Colonic mucosa (tissue), 4 donors: ENCODE measurements at regions of chr15 and their contacts with region 1.

Region 1: DNA sequence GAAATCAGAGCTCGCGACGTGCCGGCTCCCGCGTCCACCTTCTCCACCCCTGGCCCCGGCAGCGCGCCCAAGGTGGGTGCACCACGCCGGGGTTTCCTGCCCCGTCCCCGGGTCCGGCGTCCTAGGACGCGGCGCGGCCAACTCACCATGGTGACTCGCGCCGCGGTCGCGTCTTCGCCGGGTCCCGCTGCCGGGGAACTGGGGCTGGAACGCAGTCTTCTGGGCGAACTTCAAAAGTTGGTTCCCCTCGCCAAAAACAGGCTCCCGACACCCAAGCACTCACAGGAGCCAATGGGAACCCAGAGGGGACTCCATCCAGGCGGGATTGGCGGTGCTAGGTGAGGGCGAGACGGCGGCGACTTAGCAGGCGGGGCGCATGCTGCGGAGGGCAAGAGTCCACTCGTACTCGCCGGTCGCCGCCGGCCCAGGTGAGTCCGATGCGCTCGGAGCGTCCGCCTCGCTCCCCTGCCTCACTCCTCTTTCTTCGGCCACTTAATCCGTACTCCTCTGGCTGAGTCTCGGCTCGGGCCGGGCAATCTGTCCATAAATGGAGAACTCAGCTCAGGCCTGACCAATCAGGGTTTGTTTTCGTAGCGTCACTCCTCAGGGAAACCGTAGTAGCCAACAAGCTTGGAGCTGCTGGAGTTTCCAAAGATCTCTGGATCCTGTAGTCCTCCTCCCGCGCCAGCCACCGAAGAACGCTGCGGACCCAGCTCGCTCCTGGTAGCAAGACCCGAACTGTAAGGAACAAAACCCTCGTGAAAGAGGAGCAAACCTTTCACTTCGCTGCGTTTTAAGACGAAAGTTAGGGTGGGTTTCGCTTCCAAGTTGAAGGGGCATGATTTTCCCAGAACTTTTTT is at the start of gene MYO1E:
- DNase-seq: peak; percentile 95
- H3K4me3 ChIP-seq: peak within 1 kb of the TSS; percentile 87
- H3K27ac ChIP-seq: peak within 1 kb of the TSS; percentile 99
- H3K4me1 ChIP-seq: no peaks in the 10 kb centered on the region
- H3K27me3 ChIP-seq: no peaks in the 10 kb centered on the region
- CTCF ChIP-seq: no peak
- total RNA-seq, gene MYO1E: 252 to 329 TPM

Region 2: GRCh38 chr15:58918239-58918638 is 454.3 kb before region 1 on chr15:
- intact Hi-C with region 1: no loop called
- DNase-seq: no peak
- H3K4me3 ChIP-seq: no peak overlapping the region
- H3K27ac ChIP-seq: no peak overlapping the region
- H3K4me1 ChIP-seq: no peaks in the 10 kb centered on the region
- H3K27me3 ChIP-seq: no peaks in the 10 kb centered on the region
- CTCF ChIP-seq: no peak

Region 3: DNA sequence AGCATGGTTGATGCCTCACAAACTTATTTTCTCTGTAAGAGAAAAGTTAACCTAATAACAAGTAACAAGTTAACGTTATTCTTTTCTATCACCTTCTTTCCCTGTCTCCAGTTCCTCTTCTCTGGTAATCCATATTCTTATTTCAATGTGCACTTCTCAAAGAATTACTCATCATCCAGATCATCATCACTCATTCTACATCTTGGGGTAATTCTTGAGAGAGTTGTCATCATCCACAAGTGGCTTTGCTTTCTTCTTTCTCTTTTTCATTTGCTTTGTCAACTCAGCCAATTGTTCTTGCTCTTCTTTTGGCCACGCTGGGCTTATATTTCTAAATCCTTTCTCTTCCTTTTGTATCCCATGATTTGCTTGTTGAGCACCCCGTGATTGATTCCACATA is 405.9 kb before region 1 on chr15:
- intact Hi-C with region 1: no loop called
- DNase-seq: no peak
- H3K4me3 ChIP-seq: no peak overlapping the region
- H3K27ac ChIP-seq: no peak overlapping the region
- H3K4me1 ChIP-seq: no peaks in the 10 kb centered on the region
- H3K27me3 ChIP-seq: no peaks in the 10 kb centered on the region
- CTCF ChIP-seq: no peak

Region 4: DNA sequence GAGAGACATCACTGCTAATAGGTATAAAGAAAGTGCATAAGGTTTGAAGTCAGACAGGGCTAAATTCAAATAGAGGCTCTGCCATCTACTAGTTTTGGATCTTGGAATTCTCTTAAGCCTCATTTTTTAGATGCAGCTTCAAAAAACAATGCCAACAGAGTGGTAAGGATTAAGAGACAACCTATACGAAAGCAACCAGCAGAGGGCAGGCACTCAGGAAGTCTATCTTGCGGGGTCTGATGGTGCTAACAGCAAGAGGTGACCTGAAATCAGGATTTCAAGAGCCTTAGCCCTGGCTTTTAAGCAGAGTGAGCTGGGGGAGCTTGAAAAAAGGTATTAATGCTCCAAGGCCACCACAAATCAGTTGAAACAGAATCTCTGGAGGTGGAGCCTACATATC is 125.2 kb before region 1 on chr15:
- intact Hi-C with region 1: loop called (anchors 10 kb)
- DNase-seq: peak; percentile 72
- H3K4me3 ChIP-seq: no peak overlapping the region
- H3K27ac ChIP-seq: no peak overlapping the region
- H3K4me1 ChIP-seq: no peaks in the 10 kb centered on the region
- H3K27me3 ChIP-seq: no peaks in the 10 kb centered on the region
- CTCF ChIP-seq: peak; percentile 41

Region 5: DNA sequence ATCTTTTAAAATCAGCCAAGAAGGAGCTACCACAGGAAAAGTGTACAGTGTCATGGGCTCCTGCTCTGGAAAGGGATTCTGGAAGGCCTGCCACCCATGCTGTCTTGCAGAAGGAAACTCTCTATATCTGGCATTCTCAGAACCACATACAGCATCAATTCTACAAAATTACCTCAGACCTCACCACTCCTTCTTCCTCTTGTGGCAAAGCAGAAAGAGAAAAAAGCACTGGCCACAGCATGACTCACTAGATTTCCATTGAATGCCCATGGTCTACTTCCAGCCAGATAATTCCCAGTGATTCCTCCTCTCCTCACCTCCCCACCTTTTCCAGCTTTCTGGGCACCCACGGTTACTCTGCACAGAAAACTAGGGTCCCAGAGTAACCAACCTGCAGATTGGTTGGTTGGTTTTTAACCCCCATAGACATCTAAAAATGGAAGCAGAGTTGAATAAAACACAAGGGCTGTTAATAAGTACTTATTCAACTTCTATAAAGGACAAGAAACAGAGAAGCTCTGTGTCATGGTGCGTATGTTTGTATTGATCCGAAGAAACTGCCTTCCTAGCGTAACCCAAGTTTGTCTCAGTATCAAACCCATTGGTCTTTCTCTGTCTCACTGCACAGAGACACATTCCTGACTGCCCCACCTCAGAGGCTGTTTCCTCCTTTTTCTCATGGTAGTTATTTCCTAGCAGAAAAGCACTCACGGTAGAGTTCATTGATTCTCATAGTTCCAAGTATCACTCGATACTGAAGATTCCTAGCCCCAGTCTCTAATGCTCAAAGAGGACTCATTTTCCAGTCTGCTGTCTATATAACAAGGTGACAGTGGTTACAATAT is 98.2 kb before region 1 on chr15:
- intact Hi-C with region 1: no loop called
- DNase-seq: no peak
- H3K4me3 ChIP-seq: no peak overlapping the region
- H3K27ac ChIP-seq: peak overlapping the region; percentile 76
- H3K4me1 ChIP-seq: no peaks in the 10 kb centered on the region
- H3K27me3 ChIP-seq: no peaks in the 10 kb centered on the region
- CTCF ChIP-seq: no peak